WTC11 (cell line): ENCODE measurements at regions of chr17 and their contacts with region 1.

Region 1: GRCh38 chr17:49899191-49899485 is 51.3 kb upstream of the TAC4 start:
- DNase-seq: peak; percentile 69
- ATAC-seq: peak; percentile 89
- H3K4me3 Mint-ChIP-seq: no peak overlapping the region
- H3K27ac Mint-ChIP-seq: no peak overlapping the region
- H3K4me1 Mint-ChIP-seq: peaks cover 26% of the 10 kb centered on the region
- H3K27me3 Mint-ChIP-seq: peaks cover 51% of the 10 kb centered on the region
- CTCF ChIP-seq: no peak

Region 2: DNA sequence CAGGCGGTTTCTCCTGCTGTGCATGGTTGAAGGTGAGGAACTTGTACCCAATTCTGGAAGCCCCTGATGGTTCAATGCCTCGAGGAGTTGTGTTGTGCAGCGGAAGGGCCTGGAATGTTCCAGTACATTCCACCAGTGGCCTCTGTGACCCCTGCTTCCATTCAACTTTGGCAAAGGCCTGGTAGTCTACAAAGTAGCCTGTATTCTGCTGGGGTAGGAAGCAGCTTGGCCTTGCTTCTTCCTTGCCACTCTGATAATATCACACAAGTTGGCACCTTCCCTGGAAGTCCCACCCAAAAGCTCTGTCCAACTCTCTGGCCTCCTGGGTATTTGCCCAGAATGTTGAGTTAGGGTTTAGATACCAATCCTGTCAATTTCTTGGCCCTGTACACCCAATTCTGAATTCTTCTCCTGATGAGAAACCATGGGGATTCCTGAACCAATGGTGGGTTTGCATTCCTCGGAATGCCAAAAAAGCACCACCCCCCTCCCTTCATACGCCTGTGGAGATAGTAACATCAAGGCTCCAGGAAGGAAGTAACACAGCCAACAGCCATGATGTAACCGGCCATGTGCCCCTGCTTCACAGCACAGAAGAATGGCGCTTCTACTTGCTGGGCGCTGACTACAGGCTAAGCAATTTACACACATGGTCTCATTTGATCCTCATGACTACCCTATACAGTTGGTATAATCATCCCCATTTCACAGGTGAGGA is 123.4 kb before region 1 on chr17:
- CTCF ChIA-PET with region 1: no interaction called
- POLR2A ChIA-PET with region 1: no interaction called
- DNase-seq: no peak
- ATAC-seq: peak; percentile 30; the same call in 1 of the 2 replicates
- H3K4me3 Mint-ChIP-seq: no peak overlapping the region
- H3K27ac Mint-ChIP-seq: no peak overlapping the region
- H3K4me1 Mint-ChIP-seq: no peaks in the 10 kb centered on the region
- H3K27me3 Mint-ChIP-seq: peaks cover 4% of the 10 kb centered on the region
- CTCF ChIP-seq: no peak

Region 3: GRCh38 chr17:49861150-49861892 is 37.8 kb before region 1 on chr17:
- CTCF ChIA-PET with region 1: interaction called, 29 read pairs
- POLR2A ChIA-PET with region 1: no interaction called
- DNase-seq: no peak
- ATAC-seq: no peak
- H3K4me3 Mint-ChIP-seq: no peak overlapping the region
- H3K27ac Mint-ChIP-seq: no peak overlapping the region
- H3K4me1 Mint-ChIP-seq: peaks cover 41% of the 10 kb centered on the region
- H3K27me3 Mint-ChIP-seq: peaks cover 2% of the 10 kb centered on the region; the same call in 1 of the 2 replicates
- CTCF ChIP-seq: peak; percentile 80

Region 4: DNA sequence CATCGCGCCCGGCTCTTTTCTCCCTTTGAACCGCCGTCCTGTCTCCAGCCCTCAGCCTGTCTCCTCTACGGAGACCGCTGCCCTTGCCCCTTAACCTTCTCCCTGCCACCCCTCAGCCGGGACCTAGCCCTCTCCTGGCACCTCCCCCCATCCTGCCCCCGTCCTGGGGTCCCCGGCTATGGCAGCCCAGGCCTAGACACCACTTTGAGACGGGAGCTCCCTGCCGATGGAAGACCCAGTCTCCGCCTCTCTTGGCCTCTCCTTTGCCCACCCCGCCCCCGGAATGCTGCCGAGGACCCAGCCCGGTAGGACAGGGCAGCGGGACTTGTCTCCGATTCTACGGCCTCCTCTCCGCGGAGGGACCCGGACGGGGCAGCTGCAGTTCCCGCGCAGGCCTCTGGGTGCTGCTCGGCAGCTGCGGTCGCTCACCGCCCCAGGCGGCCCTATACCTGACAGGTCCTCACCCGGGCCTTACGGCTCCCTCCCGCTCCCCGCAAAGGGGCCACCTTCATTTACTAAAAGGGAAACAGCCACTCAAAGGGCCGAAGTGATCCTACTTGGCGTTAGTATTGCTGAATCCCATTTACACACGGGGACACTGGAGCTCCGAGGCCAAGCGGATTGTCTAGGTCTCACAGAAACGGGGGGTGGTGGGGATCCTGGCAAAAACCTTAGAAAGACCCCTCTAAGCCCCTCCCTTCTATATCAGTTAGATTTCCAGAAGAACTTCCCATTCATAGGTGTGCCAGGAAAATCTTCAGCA is 18.7 kb before region 1 on chr17:
- CTCF ChIA-PET with region 1: interaction called, 14 read pairs
- POLR2A ChIA-PET with region 1: interaction called, 4 read pairs
- DNase-seq: peak; percentile 96
- ATAC-seq: peak; percentile 89
- H3K4me3 Mint-ChIP-seq: peak overlapping the region; percentile 71
- H3K27ac Mint-ChIP-seq: no peak overlapping the region
- H3K4me1 Mint-ChIP-seq: peaks cover 30% of the 10 kb centered on the region
- H3K27me3 Mint-ChIP-seq: peaks cover 28% of the 10 kb centered on the region
- CTCF ChIP-seq: peak; percentile 96

Region 5: DNA sequence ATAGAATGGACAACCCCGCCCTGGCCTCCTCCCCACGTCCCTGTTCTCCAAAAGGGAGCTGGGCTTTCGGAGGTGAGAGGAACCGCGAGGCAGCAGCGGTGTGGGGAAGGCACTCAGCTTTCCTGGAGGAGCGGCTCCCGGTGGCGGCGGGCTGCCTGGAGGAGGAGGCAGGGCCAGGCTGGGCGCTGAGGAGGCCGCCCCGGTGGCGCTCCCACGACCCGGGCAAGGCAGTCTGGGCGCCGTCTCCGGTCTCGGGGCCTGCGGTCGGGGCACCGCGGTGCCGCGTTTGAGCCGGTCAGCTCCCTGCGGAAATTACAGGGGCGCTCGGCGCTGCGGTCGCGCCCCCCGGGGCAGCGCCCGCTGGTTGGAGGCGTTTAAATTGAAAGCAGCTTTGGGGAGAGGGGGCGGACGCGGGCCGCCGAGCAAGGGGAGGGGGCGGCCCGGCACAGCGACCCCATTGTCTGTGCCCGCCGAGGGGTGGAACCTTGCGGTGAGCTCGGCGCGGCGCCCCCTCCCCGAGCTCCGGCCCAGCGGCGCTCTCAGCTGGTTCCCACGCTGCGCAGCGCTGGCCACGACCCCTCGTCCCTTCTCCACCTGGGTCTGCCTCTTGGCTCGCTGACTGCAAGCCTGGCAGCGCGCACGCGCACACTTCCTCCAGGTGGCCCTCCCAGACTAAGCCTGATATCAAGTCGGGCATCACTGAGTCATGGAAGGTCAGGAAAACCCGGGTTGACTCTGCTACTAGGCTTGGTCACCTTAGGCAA is 11.1 kb after region 1 on chr17:
- CTCF ChIA-PET with region 1: interaction called, 22 read pairs
- POLR2A ChIA-PET with region 1: interaction called, 3 read pairs
- DNase-seq: peak; percentile 68
- ATAC-seq: peak; percentile 71
- H3K4me3 Mint-ChIP-seq: peak overlapping the region; percentile 81
- H3K27ac Mint-ChIP-seq: no peak overlapping the region
- H3K4me1 Mint-ChIP-seq: peaks cover 26% of the 10 kb centered on the region
- H3K27me3 Mint-ChIP-seq: peaks cover 84% of the 10 kb centered on the region
- CTCF ChIP-seq: no peak

Region 6: GRCh38 chr17:49944273-49944890 is 45.2 kb after region 1 on chr17:
- CTCF ChIA-PET with region 1: interaction called, 15 read pairs
- POLR2A ChIA-PET with region 1: no interaction called
- DNase-seq: no peak
- ATAC-seq: peak; percentile 56
- H3K4me3 Mint-ChIP-seq: no peak overlapping the region
- H3K27ac Mint-ChIP-seq: no peak overlapping the region
- H3K4me1 Mint-ChIP-seq: 0 out of 2 replicates have a peak, but pooled peaks cover 3% of the 10 kb centered on the region
- H3K27me3 Mint-ChIP-seq: peaks cover 22% of the 10 kb centered on the region
- CTCF ChIP-seq: no peak

Region 7: GRCh38 chr17:49980703-49981197 is 81.6 kb after region 1 on chr17:
- CTCF ChIA-PET with region 1: interaction called, 19 read pairs
- POLR2A ChIA-PET with region 1: interaction called, 3 read pairs
- DNase-seq: peak; percentile 85
- ATAC-seq: peak; percentile 95
- H3K4me3 Mint-ChIP-seq: no peak overlapping the region
- H3K27ac Mint-ChIP-seq: no peak overlapping the region
- H3K4me1 Mint-ChIP-seq: peaks cover 45% of the 10 kb centered on the region
- H3K27me3 Mint-ChIP-seq: peaks cover 91% of the 10 kb centered on the region
- CTCF ChIP-seq: no peak